ENCODE measurements at regions of chr18 and their contacts with region 1.

Region 1: DNA sequence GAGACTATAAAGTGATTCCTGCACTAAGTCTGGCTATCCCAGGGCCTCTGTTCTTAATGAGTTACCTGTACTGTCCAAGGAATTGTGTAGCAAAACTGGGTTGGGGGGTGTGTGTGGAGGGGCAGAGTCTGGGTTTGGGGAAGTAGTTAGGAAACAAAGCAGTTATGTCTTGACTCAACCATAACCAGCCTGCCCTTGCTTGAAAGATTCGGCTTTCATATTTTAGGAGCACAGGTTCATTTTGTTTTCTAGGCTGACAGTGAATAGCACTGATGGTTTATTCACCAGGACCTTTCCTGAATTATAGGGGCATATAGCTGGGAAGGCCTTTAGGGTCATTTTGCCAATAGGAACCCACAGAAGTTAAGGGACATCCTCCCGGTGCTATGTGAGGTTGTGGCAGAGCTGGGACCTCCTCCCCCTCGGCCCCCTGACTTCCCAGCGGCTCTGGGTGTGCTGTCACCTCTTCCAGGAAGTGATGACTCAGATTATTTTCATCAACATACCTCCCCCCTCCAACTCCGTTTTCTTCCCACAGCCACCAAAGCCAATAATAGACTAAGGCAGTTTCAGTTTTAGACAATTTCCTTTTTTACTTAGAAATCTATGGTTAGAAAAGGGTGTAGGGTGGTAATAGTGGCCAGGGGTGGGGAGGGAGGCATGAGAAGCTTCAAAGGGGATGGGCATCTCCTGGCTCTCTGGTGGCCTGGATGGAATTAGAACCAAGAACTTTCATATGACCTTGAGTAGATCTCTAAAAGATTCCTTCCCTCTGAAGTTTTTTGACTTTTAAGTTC is 44.8 kb downstream of the SETBP1 start:
- DNase-seq: peak; percentile 41
- ATAC-seq: peak; percentile 59
- H3K4me3 Mint-ChIP-seq: peak overlapping the region; percentile 70
- H3K27ac Mint-ChIP-seq: peak overlapping the region; percentile 88
- H3K4me1 Mint-ChIP-seq: peaks cover 99% of the 10 kb centered on the region
- H3K27me3 Mint-ChIP-seq: no peaks in the 10 kb centered on the region
- CTCF ChIP-seq: no peak

Region 2: DNA sequence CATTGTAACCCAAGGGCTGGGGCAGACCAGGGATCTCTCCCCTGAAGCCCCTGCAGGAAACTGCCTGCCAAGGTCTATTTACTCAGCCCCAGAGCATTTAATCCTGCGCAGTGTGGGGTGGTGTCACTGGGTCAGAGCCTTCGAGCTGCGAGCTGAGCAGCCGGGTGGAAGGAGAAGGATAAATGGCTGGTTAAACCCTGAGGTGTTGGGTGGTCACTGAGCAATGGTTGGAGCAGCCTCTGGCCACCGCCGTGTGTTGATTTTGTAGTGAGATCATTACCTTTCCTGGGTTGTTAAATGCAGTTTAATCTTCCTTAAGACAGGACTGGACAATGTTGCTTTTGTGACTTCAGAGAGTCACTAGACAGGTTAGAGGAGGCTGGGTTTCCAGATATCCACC is 53.3 kb after region 1 on chr18:
- CTCF ChIA-PET with region 1: no interaction called
- POLR2A ChIA-PET with region 1: interaction called, 11 read pairs
- intact Hi-C with region 1: no loop called
- DNase-seq: no peak
- ATAC-seq: no peak
- H3K4me3 Mint-ChIP-seq: no peak overlapping the region
- H3K27ac Mint-ChIP-seq: peak overlapping the region; percentile 65
- H3K4me1 Mint-ChIP-seq: peaks cover 81% of the 10 kb centered on the region
- H3K27me3 Mint-ChIP-seq: no peaks in the 10 kb centered on the region
- CTCF ChIP-seq: no peak

Region 3: GRCh38 chr18:44786688-44787087 is 61.2 kb after region 1 on chr18:
- CTCF ChIA-PET with region 1: no interaction called
- POLR2A ChIA-PET with region 1: interaction called, 8 read pairs
- intact Hi-C with region 1: loop called (anchors 2 kb)
- DNase-seq: no peak
- ATAC-seq: peak; percentile 75
- H3K4me3 Mint-ChIP-seq: peak overlapping the region; percentile 85
- H3K27ac Mint-ChIP-seq: peak overlapping the region; percentile 92
- H3K4me1 Mint-ChIP-seq: peaks cover 80% of the 10 kb centered on the region
- H3K27me3 Mint-ChIP-seq: no peaks in the 10 kb centered on the region
- CTCF ChIP-seq: no peak

Region 4: DNA sequence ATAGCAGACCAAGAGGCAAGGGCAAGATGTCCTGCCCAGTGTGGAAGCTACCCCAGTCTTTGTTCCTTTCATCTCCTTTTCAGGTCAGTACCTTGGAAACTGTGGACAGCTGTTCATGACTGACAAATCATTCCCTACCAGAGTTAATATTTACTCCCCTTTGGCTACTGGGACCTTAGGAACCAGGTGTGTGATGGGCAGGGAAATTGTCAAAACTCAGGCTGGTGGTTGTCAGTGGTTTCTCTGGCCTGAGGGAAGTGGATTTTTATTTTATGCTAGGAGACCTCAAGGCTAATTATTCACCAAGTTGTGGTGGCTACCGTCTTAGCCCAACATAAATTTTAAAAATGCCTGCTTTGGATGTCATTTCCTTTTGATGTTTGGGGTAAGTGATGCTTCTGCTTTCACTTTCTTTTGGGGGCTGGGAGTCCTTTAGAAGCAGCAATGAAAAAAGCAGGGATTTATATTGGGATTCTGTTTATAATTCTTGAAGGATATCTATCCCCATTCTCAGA is 74.5 kb after region 1 on chr18:
- CTCF ChIA-PET with region 1: no interaction called
- POLR2A ChIA-PET with region 1: no interaction called
- intact Hi-C with region 1: loop called (anchors 1 kb)
- DNase-seq: no peak
- ATAC-seq: peak; percentile 43
- H3K4me3 Mint-ChIP-seq: peak overlapping the region; percentile 61
- H3K27ac Mint-ChIP-seq: peak overlapping the region; percentile 86
- H3K4me1 Mint-ChIP-seq: peaks cover 94% of the 10 kb centered on the region
- H3K27me3 Mint-ChIP-seq: no peaks in the 10 kb centered on the region
- CTCF ChIP-seq: no peak

Region 5: GRCh38 chr18:44887227-44887631 is 161.7 kb after region 1 on chr18:
- CTCF ChIA-PET with region 1: no interaction called
- POLR2A ChIA-PET with region 1: interaction called, 14 read pairs
- intact Hi-C with region 1: loop called (anchors 1 kb)
- DNase-seq: peak; percentile 23
- ATAC-seq: peak; percentile 95
- H3K4me3 Mint-ChIP-seq: peak overlapping the region; percentile 59
- H3K27ac Mint-ChIP-seq: peak overlapping the region; percentile 94
- H3K4me1 Mint-ChIP-seq: peaks cover 58% of the 10 kb centered on the region
- H3K27me3 Mint-ChIP-seq: no peaks in the 10 kb centered on the region
- CTCF ChIP-seq: no peak

Region 6: DNA sequence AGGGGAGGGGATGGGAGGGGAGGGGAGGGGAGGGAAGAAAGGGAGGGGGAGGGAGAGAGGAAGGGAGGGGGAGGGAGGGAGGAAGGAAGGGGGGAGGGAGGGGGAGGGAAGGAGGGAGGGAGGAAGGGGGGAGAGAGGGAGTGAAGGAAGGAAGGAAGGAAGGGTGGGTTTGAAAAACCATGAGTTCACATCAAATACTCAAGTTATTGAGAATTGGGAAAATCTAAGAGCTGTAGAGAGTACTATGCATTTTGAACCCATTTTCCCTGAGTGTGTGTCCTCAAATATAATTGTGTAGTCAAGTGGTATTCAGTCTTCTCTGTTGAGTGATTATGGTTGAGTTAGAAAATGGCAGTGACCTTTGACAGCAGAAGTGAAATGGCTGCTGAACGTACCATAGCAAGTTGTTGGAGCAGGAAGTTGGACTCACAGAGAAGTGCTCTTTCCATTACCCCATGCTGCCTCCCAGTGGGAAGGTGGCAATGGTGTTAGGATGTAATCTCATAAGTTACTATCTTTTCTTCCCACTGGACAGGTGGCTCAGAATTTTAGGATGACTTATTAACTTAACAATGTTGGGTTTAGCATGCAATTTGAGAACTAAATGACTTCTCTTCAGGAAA is 169.8 kb after region 1 on chr18:
- CTCF ChIA-PET with region 1: no interaction called
- POLR2A ChIA-PET with region 1: no interaction called
- intact Hi-C with region 1: loop called (anchors 2 kb)
- DNase-seq: no peak
- ATAC-seq: peak; percentile 62
- H3K4me3 Mint-ChIP-seq: no peak overlapping the region
- H3K27ac Mint-ChIP-seq: no peak overlapping the region
- H3K4me1 Mint-ChIP-seq: peaks cover 47% of the 10 kb centered on the region
- H3K27me3 Mint-ChIP-seq: no peaks in the 10 kb centered on the region
- CTCF ChIP-seq: no peak